ENCODE measurements at regions of chrX and their contacts with region 1.

Region 1: DNA sequence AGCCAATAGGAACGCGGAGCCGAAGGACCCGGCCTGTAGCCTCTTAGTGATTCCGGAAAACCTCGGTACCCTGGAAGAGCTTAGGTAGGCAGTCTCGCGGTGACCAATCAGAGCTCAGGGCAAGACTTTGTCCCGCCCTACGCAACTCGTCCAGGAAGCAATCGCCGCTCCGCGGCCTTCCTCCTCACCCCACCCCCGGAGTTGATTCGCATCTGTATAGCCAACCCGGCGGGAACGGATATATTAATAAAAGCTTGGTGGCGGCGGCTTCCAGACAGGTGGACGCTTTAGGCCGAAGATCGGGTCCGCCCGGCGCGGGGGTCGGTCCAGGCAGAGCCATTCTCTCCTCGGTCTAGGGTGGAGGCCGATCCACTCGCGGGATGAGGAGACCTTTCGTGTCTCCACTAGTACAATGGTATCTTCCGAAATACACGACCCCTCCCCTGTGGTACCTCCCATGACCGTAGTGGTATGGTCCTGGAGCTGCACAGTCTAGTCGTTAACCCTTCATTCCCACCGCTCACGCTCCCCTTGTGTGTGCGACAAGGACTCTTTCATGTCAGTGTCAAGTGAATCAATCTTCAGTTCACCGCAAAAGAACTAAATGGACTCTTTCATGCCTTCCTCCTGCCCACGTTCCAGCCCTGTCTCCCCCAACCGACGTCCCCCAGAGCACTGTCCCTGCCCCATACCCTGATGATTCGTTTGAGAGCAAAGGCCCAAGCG is 24.2 kb upstream of the GLOD5 start:
- DNase-seq: peak; percentile 82 to 99 (median 86)

Region 2: GRCh38 chrX:48676106-48676892 is 61.1 kb before region 1 on chrX:
- intact Hi-C with region 1: loop called (anchors 1 kb)
- DNase-seq: peak; percentile 74 to 97 (median 81)

Region 3: DNA sequence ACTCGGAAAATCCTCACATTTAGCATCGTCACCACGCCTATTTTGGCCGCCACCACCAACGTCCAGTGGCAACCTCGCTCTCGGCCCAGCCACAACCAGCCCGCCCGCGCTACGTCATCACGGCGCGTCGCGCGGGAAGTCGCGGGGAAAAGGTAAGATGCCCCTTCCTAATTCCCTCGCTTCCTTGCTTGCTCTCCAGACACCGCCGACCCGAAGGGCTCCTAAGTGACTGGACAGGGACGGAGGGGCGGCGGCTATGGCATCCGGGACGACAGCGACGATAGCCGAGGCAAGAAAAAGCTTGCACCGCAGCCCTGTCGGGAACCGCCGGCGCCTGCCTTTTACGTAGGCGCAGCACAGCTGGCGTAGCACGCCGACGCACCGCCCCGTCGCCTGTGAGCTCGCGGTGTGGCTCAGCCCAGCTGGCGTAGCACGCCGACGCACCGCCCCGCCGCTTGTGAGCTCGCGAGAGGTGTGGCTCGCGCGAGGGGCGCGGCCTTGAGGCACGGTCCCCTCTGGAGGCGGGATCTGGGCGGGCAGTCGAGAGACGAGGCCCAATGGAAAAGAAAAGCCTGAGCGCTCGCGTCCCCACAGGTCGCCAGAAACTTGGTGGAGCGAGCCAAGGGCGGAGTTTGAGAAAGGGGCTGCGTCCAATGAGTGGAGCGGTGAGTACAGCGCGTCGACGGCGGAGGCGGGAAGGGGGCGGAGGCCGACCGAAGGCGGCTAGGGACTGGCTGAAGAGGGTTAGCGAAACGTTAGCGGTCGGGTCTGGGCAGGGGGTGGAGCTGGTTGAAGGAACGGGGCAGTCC is 64.1 kb after region 1 on chrX and contains the start of gene HDAC6:
- intact Hi-C with region 1: loop called (anchors 2 kb)
- DNase-seq: peak; percentile 86 to 100 (median 96)